GM12878 (cell line): ENCODE measurements at regions of chr15 and their contacts with region 1.

Region 1: DNA sequence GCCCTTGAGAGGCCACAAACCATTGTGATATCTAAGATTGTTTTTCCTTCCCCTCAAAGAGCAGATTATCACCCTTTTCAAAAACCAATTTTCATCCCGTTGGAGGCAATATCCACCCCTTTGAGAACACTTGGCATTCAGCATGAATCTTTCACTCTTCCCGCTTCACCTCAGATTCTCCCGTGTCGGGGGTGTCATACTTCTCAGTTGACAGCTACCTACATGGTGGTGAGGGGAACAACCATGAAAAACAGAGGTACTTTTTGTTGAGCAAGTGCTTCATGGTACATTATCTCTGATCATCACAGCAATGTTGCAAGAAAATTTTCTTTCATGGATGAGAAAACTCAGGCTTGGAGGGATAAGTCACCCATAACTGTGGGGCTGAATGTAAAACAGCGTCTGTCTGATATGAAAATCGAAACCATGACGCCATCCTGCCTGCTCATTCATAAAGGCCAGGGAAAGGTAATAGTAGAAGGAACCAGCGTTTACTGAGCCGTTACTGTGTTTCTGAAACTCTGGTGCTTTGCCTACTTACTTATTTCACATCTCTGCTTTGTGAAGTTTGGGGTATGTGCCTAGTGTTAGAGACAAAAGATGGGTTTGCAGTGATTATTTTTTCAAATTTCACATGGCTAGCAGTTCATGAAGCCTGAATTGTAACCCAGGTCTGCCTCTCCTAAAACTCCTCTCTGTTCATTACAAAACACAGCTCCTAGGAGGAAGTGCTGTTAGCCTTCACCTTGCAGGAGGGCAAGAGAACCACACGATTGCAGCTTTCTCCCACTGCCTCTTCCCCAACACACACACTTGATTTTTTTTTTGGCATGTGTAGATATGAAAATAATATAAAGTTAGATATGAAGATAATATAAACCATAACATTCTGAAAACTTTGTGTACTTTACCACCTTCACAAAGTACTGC is 35.4 kb downstream of the SV2B start:
- DNase-seq: peak; percentile 36
- ATAC-seq: peak; percentile 96
- H3K4me3 ChIP-seq: no peak overlapping the region
- H3K27ac ChIP-seq: peak overlapping the region; percentile 53
- H3K4me1 ChIP-seq: peaks cover 24% of the 10 kb centered on the region
- H3K27me3 ChIP-seq: no peaks in the 10 kb centered on the region
- CTCF ChIP-seq: no peak
- EP300 ChIP-seq: peak in 1 of 2 experiments; percentile 75; a peak in 2 of 4 replicates
- POLR2A ChIP-seq: no peak
- RAD21 ChIP-seq: no peak

Region 2: DNA sequence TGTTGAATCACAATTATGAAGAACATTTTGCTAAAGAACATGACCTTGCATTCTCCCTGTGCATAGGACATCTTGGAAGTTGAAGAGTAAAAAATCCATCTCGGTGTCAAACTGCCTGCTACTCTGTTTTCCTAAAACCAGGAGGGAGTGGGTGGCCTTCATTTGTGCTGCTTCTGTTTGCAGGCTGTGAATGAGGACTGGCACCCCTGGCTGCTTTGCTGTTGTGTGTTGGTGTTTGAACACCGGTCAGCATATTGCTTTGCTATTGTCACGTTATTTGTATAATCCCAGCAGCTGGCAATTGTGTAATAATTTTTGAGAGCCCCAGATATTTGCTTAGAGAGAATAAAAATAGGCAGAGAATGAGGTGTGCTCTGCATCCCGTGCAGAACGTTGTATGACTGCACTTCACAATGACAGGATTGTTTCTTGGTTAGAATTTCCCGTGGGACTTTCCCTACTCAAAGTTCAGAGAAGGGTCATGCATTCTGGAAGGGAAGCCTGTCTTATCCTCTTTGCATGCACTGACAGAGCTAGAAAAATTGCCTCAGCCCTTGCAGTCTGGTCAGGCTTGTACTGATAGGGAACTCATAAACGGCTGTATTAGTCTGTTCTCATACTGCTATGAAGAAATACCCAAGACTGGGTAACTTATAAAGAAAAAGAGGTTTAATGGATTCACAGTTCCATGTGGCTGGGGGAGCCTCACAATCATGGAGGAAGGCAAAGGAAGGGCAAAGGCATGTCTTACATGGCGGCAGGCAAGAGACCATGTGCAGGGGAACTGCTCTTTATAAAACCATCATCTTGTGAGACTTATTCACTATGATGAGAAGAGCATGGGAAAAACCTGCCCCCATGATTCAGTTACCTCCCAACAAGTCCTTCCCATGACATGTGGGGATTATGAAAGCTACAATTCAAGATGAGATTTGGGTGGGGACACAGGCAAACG is 19.1 kb before region 1 on chr15:
- CTCF ChIA-PET with region 1: interaction called, 3 read pairs
- POLR2A ChIA-PET with region 1: interaction called, 6 read pairs
- RAD21 ChIA-PET with region 1: interaction called, 5 read pairs
- SMC1A ChIA-PET with region 1: interaction called, 12 read pairs
- in situ Hi-C with region 1: no loop called
- intact Hi-C with region 1: no loop called
- DNase-seq: peak; percentile 65
- ATAC-seq: peak; percentile 94
- H3K4me3 ChIP-seq: no peak overlapping the region
- H3K27ac ChIP-seq: peak overlapping the region; percentile 64
- H3K4me1 ChIP-seq: peaks cover 11% of the 10 kb centered on the region
- H3K27me3 ChIP-seq: no peaks in the 10 kb centered on the region
- CTCF ChIP-seq: no peak
- EP300 ChIP-seq: peak; percentile 79 to 89; a peak in 2 of 4 replicates
- POLR2A ChIP-seq: no peak
- RAD21 ChIP-seq: peak; percentile 10; the same call in 1 of the 2 replicates